Gastrocnemius medialis (tissue), 4 donors: ENCODE measurements at regions of chr3 and their contacts with region 1.

Region 1: DNA sequence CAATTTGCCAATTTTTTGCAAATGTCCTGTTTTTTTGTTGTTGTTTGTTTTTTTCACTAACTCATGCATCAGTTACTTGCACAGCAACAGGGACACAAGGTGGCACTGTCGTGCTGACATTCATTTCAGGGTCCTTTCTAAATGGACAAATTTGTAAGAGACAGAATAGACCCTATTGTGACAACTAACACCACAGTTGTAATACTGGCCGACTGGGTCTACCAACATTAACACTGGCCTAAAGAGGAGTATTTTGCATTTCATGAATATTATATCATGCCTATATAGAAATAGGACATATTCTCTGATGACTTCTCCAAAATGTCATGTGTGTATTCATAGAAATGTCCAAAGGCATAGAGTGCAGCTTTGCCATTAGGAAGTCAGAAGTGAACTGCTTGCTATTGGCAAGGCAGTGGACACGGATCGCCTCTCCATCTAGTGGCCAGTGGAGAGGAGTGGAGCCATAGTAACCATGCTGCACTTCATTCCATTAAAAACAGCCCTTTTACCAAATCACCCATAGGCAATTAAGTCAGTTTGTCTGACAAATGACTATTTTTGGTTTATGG is 54.8 kb downstream of the ZBTB20 start:
- DNase-seq: peak; percentile 66 to 70
- ATAC-seq: peak; percentile 98
- H3K4me3 ChIP-seq: no peak overlapping the region
- H3K27ac ChIP-seq: peak overlapping the region; percentile 21 to 82 (median 56)
- H3K4me1 ChIP-seq: peaks cover 65 to 75% of the 10 kb centered on the region in 2 donors
- H3K27me3 ChIP-seq: no peaks in the 10 kb centered on the region
- CTCF ChIP-seq: peak; percentile 62 to 92 (median 74)
- POLR2A ChIP-seq: no peak

Region 2: DNA sequence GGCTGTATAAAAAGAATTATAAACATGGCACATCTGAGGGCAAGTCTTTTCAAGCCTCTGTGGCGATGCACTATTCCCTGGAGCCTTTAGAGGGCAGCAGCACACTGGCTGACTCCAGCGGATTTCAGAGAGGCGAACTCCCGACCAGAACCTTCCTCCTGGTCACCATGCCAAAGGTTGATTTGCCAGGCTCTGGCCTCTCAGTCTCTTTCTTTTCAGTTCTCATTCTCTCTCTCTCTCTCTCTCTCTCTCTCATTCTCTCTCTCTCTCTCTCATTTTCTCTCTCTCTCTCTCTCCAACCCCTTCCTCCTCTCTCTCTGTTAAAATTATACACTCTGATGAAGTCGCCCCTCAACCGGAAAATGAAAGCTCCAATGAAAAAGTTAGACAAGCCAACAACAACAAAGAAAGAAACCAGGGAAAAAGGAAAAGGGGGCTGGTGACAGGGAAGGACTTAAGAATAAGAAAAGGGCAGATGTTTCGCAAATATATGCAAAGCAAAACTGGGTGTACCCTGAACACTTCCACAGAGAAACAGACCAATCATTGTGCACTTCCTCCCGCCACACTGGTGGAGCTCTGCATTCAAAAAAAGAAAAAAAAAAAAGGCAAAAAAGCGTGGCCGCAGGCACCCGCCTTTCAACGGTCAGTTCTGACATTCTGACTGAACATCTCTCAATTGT is 708.3 kb before region 1 on chr3:
- in situ Hi-C with region 1: no loop called
- intact Hi-C with region 1: loop called (anchors 5 kb)
- DNase-seq: peak; percentile 70 to 80
- ATAC-seq: peak; percentile 84 to 94
- H3K4me3 ChIP-seq: peak overlapping the region; percentile 35 to 61 (median 49)
- H3K27ac ChIP-seq: peak overlapping the region; percentile 69 to 87 (median 75)
- H3K4me1 ChIP-seq: peaks cover 56 to 57% of the 10 kb centered on the region in 2 donors
- H3K27me3 ChIP-seq: no peaks in the 10 kb centered on the region
- CTCF ChIP-seq: peak; percentile 87 to 96 (median 91)
- POLR2A ChIP-seq: peak in 1 of 2 donors; percentile 10

Region 3: GRCh38 chr3:114827495-114827894 is 264.8 kb before region 1 on chr3:
- in situ Hi-C with region 1: loop called in 3 of 4 experiments (anchors 5 to 25 kb)
- intact Hi-C with region 1: loop called (anchors 1 kb)
- DNase-seq: no peak
- ATAC-seq: peak; percentile 44 to 68
- H3K4me3 ChIP-seq: no peak overlapping the region
- H3K27ac ChIP-seq: no peak overlapping the region
- H3K4me1 ChIP-seq: peaks cover 2 to 47% of the 10 kb centered on the region in 2 donors
- H3K27me3 ChIP-seq: no peaks in the 10 kb centered on the region
- CTCF ChIP-seq: peak; percentile 41 to 66 (median 57)
- POLR2A ChIP-seq: no peak

Region 4: GRCh38 chr3:114839476-114839875 is 252.8 kb before region 1 on chr3:
- in situ Hi-C with region 1: loop called in 2 of 4 experiments (anchors 10 to 25 kb)
- intact Hi-C with region 1: no loop called
- DNase-seq: no peak
- ATAC-seq: peak in 1 of 2 donors; percentile 49
- H3K4me3 ChIP-seq: no peak overlapping the region
- H3K27ac ChIP-seq: no peak overlapping the region
- H3K4me1 ChIP-seq: peaks cover 0 to 4% of the 10 kb centered on the region in 2 donors
- H3K27me3 ChIP-seq: no peaks in the 10 kb centered on the region
- CTCF ChIP-seq: no peak
- POLR2A ChIP-seq: no peak

Region 5: DNA sequence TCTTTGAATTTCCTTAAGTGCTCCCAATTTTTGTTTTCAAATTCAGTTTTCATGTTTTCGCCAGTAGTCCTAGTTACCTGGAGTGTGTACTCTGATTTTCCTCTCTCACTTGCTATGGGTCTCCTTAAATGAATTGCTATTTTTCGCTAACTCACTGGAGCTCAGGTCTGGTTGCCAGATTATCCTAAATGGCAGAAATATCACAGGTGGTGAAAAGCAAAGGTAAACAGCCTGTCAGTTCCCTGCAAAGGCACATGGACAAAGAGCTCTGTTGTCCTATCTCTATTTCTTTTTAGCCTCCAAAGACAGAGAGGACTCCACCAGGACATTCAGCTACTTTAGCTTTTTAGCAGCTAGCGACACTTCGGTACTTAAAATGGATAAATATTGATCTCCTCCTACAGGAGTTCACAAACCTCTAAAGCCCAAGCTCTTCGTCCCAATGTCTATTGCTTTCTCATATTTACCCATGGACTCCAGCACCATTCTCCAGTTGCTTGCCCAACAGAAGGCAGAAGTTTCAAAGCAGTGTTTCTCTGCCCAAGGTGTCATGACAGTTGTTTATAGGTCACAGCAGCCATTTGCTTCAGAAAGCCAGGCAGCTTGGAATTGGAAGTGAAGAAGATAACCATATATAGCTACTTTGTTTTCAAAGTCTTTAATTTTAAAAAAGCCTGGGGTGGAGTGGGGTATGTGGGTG is 42.5 kb after region 1 on chr3:
- in situ Hi-C with region 1: no loop called
- intact Hi-C with region 1: no loop called
- DNase-seq: no peak
- ATAC-seq: peak in 1 of 2 donors; percentile 89
- H3K4me3 ChIP-seq: no peak overlapping the region
- H3K27ac ChIP-seq: peak overlapping the region in 1 of 4 donors; percentile 19
- H3K4me1 ChIP-seq: peaks cover 16 to 25% of the 10 kb centered on the region in 2 donors
- H3K27me3 ChIP-seq: no peaks in the 10 kb centered on the region
- CTCF ChIP-seq: no peak
- POLR2A ChIP-seq: no peak

Region 6: DNA sequence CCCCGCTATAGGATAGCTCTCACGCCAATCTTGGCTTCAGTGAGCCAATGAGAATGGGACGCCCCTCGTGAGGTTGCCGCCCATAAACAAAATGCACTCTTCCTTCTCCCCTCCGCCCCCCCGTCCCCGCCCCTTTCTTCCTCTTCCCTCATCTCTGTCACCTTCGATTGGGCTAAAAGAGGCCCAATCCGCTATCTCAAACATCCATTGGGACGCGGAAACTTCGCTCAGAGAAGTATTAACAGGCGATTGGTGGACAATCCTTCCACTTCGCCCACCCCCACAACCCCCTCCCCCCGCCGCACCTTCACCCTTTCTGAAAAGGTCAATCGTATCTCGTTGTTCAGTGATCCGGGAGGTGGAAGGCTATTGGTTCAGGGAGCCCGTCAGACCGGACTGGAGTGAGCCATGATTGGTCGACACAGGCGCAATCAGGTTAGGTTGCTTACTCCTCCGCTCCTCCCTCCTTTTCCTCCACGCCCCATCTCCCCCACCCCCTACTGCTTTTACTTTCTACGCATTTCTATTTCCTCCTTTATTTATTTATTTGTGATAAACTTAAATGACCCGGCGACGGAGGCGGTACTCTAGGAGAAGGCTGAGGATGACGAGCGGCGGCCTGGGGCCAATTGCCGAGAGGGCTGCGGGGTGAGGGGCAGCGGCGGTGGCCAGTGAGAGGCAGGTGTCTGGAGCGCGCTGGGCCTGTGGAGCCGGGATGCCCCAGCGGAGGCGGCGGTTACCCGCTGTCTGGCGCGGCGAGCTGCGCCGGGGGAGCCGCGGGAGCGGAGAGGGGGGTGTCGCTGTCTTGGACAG is 55.2 kb after region 1 on chr3:
- in situ Hi-C with region 1: no loop called
- intact Hi-C with region 1: loop called (anchors 2 kb)
- DNase-seq: peak; percentile 99 to 100
- ATAC-seq: peak; percentile 83 to 86
- H3K4me3 ChIP-seq: peak overlapping the region; percentile 84 to 94 (median 88)
- H3K27ac ChIP-seq: peak overlapping the region; percentile 96 to 100 (median 98)
- H3K4me1 ChIP-seq: peaks cover 26 to 41% of the 10 kb centered on the region in 2 donors
- H3K27me3 ChIP-seq: no peaks in the 10 kb centered on the region
- CTCF ChIP-seq: peak in 1 of 5 experiments; percentile 21
- POLR2A ChIP-seq: peak; percentile 70 to 86

Region 7: DNA sequence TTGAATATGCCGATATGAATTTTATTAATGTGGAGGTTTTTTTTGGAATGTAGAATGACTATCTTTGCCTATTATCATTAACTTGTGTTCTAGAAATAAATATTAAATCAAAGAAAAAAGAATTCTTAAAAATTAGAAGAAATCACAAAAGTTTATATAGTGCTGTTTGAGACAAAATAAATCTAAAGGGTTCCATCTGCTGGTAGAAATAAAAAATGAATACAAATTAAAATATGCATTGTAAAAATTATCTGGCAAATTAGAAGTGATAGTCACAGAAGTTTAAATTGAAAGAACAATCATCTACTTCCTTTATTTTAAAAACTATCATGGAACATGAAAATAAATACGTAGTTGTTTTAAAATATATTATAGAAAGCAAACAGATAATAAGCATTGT is 77.5 kb after region 1 on chr3:
- in situ Hi-C with region 1: loop called in 1 of 4 experiments (anchors 10 kb)
- intact Hi-C with region 1: loop called (anchors 2 kb)
- DNase-seq: no peak
- ATAC-seq: no peak
- H3K4me3 ChIP-seq: no peak overlapping the region
- H3K27ac ChIP-seq: no peak overlapping the region
- H3K4me1 ChIP-seq: no peaks in the 10 kb centered on the region
- H3K27me3 ChIP-seq: no peaks in the 10 kb centered on the region
- CTCF ChIP-seq: peak in 4 of 5 experiments; percentile 15 to 57 (median 42)
- POLR2A ChIP-seq: no peak